PC-9 (cell line): ENCODE measurements at regions of chr17 and their contacts with region 1.

Region 1: GRCh38 chr17:48892940-48893645 is 506 bp downstream of the ATP5MC1 start:
- DNase-seq: no peak
- H3K4me3 ChIP-seq: peak overlapping the region; percentile 72
- H3K27ac ChIP-seq: peak overlapping the region; percentile 42
- H3K4me1 ChIP-seq: peaks cover 9% of the 10 kb centered on the region
- H3K27me3 ChIP-seq: no peaks in the 10 kb centered on the region
- CTCF ChIP-seq: no peak

Region 2: GRCh38 chr17:48678141-48678971 is 214.7 kb before region 1 on chr17:
- CTCF ChIA-PET with region 1: no interaction called
- POLR2A ChIA-PET with region 1: no interaction called
- intact Hi-C with region 1: no loop called
- DNase-seq: peak; percentile 41 to 64
- H3K4me3 ChIP-seq: no peak overlapping the region; the same call in 1 of the 2 replicates
- H3K27ac ChIP-seq: no peak overlapping the region
- H3K4me1 ChIP-seq: 0 out of 2 replicates have a peak, but pooled peaks cover 4% of the 10 kb centered on the region
- H3K27me3 ChIP-seq: peaks cover 36% of the 10 kb centered on the region
- CTCF ChIP-seq: peak; percentile 97

Region 3: GRCh38 chr17:48825446-48826381 is 67.4 kb before region 1 on chr17:
- CTCF ChIA-PET with region 1: no interaction called
- POLR2A ChIA-PET with region 1: interaction called, 23 read pairs
- intact Hi-C with region 1: no loop called
- DNase-seq: peak; percentile 27 to 78
- H3K4me3 ChIP-seq: no peak overlapping the region
- H3K27ac ChIP-seq: peak overlapping the region; percentile 32
- H3K4me1 ChIP-seq: peaks cover 11% of the 10 kb centered on the region
- H3K27me3 ChIP-seq: no peaks in the 10 kb centered on the region
- CTCF ChIP-seq: no peak

Region 4: DNA sequence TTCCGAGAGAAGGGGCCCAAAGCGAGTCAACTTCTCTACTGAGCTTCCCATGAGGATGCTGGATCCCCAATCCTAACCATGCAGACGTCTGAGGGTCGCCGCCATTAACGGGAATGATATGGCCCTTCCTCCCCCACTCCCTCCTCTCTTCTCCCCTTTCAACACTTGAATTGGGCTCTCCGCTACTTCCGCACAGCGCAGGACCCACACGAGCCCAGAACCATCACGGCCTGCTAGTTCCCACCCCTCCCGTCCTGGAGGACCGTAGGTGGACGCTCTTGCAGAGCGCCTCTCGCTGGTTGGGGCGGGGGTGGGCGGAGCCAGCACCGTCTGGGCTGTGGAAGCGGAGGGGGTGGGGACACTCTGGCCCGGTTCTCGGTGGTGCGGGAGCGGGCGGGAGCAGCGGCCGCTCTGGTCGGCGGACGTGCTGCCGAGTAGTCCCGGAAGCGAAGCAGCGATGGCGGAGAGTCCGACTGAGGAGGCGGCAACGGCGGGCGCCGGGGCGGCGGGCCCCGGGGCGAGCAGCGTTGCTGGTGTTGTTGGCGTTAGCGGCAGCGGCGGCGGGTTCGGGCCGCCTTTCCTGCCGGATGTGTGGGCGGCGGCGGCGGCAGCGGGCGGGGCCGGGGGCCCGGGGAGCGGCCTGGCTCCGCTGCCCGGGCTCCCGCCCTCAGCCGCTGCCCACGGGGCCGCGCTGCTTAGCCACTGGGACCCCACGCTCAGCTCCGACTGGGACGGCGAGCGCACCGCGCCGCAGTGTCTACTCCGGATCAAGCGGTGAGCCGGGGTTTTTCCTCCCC is 15.2 kb after region 1 on chr17 and contains the start of gene UBE2Z:
- CTCF ChIA-PET with region 1: no interaction called
- POLR2A ChIA-PET with region 1: interaction called, 5 read pairs
- intact Hi-C with region 1: loop called (anchors 1 kb)
- DNase-seq: peak; percentile 85 to 86
- H3K4me3 ChIP-seq: peak within 1 kb of the TSS; percentile 89
- H3K27ac ChIP-seq: peak within 1 kb of the TSS; percentile 90
- H3K4me1 ChIP-seq: peaks cover 33% of the 10 kb centered on the region
- H3K27me3 ChIP-seq: no peaks in the 10 kb centered on the region
- CTCF ChIP-seq: 0 out of 2 replicates have a peak, but pooled peaks have one; percentile 16
- total RNA-seq, gene UBE2Z: 99.4 and 100.0 TPM in 2 replicates

Region 5: DNA sequence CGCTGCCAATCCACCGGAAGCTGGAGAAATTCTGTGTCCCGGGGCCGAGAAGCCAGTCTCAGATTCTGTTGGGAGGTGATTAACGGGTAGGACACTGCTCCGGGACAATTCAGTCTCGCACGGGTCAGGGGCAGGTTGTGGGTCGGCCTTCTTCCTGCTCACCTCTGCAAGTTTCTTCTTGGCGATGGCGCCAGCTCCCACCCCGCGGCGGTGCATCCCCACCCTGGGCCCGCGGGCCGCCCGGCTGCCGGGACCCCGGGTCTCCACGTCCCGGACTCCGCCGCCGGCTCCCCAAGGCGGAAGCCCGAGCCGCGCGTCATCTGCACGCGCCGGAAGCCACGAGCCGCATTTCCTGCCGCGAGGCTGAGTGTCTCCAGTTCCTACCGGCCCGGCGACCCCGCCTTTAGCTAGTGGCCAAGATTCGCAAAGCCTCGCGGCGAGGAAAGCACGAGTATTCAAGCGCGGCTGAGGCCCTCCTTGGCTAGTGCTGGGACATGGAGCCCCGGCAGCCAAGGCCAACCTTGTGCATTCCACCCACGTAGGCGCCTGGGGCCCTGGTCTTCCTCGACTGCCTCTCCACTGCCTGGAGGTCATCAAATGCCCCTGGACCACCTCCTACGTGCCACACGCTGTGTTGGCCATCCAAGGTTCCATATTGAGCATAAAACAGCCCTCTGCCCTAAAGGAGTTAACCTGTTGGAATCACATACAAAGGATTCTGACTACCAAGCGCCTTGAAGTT is 51.6 kb after region 1 on chr17 and contains the start of gene SNF8:
- CTCF ChIA-PET with region 1: interaction called, 4 read pairs
- POLR2A ChIA-PET with region 1: interaction called, 14 read pairs
- intact Hi-C with region 1: loop called (anchors 2 kb)
- DNase-seq: peak; percentile 87 to 88
- H3K4me3 ChIP-seq: peak within 1 kb of the TSS; percentile 67
- H3K27ac ChIP-seq: peak within 1 kb of the TSS; percentile 86
- H3K4me1 ChIP-seq: peaks cover 11% of the 10 kb centered on the region
- H3K27me3 ChIP-seq: no peaks in the 10 kb centered on the region
- CTCF ChIP-seq: no peak
- total RNA-seq, gene SNF8: 103 and 118 TPM in 2 replicates

Region 6: DNA sequence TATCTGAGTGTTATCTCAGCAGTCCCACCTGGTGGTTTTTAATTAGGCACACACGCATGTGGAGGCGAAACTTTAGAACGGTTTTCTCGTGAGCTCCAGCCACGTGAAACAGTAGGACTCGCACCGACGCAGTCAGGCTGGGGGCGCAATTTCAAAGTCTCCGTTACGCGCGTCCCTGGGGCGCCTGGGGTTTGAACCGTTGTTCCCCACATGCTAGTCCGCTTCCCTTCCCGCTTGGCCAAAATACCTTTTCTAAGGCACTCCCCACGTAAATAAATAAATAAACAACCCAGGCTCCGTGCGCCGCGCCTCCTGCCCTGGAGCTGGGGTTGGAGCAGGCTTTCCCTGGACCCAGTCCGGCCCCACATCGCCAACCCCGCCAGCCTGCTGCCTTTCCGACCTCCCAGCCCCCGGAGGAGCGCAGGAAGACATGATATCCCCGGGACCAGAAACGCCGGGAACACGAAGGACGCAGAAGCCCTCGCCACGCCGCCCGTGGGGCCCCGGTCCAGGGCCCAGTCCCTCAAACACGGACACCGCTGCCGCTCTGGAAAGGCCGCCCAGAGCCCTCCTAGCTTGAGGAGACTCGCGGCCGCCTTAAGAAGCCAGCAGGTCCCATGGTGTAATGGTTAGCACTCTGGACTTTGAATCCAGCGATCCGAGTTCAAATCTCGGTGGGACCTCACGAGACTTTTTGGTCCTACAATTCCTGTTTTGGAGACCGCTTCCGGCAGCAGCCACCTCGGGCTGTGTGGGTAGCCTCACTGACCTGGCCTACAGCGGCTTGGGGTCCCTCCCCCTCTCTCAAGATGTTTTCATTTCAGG is 299.0 kb after region 1 on chr17:
- CTCF ChIA-PET with region 1: no interaction called
- POLR2A ChIA-PET with region 1: no interaction called
- intact Hi-C with region 1: loop called (anchors 10 kb)
- DNase-seq: peak; percentile 82 to 91
- H3K4me3 ChIP-seq: peak overlapping the region; percentile 74
- H3K27ac ChIP-seq: peak overlapping the region; percentile 87
- H3K4me1 ChIP-seq: peaks cover 12% of the 10 kb centered on the region
- H3K27me3 ChIP-seq: no peaks in the 10 kb centered on the region
- CTCF ChIP-seq: peak; percentile 40; the same call in 1 of the 2 replicates

Region 7: DNA sequence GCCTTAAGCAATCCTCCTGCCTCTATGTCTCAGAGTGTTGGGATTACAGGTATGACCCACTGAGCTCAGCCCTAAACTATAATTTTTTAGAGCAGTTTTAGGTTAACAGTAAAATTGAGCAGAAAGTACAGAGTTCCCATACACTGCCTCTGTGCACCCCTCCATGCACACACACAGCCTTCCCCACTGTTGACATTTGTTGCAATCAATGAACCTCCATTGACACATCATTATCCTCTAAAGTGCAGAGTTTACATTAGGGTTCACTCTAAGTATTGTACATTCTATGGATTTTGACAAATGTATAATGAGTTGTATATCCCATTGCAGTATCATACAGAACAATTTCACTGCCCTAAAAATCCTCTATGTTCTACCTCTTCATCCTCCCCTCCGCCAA is 637.0 kb after region 1 on chr17:
- CTCF ChIA-PET with region 1: no interaction called
- POLR2A ChIA-PET with region 1: interaction called, 14 read pairs
- intact Hi-C with region 1: no loop called
- DNase-seq: no peak
- H3K4me3 ChIP-seq: no peak overlapping the region
- H3K27ac ChIP-seq: no peak overlapping the region
- H3K4me1 ChIP-seq: no peaks in the 10 kb centered on the region
- H3K27me3 ChIP-seq: peaks cover 53% of the 10 kb centered on the region
- CTCF ChIP-seq: no peak